K562 (cell line): ENCODE measurements at regions of chr17 and their contacts with region 1.

Region 1: DNA sequence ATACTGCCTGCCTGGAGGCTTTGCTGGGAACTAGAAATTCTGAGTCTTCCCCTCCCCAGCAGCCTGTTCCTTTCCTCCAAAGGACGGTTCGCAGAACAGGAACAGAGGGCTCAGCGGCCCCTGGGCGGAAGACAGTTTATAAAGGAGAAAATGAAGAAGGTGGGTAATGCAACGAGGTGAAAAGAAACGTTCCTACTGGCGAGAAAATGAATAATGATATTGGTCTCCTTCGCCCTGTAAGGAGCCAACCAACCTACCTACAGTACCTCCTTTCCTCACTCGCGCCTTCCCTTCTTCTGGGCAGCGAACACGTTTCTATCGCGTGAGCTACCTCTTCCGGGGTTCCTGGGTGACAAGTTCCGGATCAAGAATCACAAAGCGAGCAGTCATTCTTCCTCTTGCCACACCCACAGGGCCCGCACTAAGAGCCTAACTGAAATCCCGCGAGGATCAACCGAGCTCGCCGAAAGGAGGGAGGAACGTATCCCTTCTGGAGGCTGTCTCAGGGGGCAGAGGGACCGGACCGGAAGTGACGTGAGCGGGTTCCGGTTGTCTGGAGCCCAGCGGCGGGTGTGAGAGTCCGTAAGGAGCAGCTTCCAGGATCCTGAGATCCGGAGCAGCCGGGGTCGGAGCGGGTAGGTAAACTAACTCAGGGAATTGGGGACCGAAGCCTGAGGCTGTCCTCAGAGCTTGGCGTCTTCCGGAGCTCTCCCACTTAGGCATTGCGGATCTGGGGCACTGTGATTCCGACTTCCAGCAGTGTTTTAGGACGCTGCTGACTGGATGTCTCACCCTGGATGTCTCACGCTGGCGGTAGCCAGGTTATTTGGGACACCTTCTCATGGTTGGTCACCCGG is at the starts of genes PTRH2 and VMP1:
- DNase-seq: peak; percentile 94 to 99 (median 96)
- ATAC-seq: peak; percentile 93
- H3K4me3 ChIP-seq: peak within 1 kb of the TSS; percentile 92
- H3K27ac ChIP-seq: peak within 1 kb of the TSS; percentile 99
- H3K4me1 ChIP-seq: peaks cover 13 to 16% of the 10 kb centered on the region in 2 experiments; a peak in 3 of 5 replicates
- H3K27me3 ChIP-seq: no peaks in the 10 kb centered on the region
- CTCF ChIP-seq: 0 out of 6 replicates have a peak, but pooled peaks of 1 of the 3 experiments have one; percentile 9
- EP300 ChIP-seq: no peak; the same call in none of the 2 replicates
- POLR2A ChIP-seq: peak; percentile 99
- RAD21 ChIP-seq: no peak
- polyA plus RNA-seq, gene PTRH2: 195 to 210 TPM
- polyA plus RNA-seq, gene VMP1: 245 to 272 TPM

Region 2: GRCh38 chr17:59725691-59726090 is 18.3 kb after region 1 on chr17:
- CTCF ChIA-PET with region 1: no interaction called
- POLR2A ChIA-PET with region 1: interaction called, 10 read pairs
- in situ Hi-C with region 1: no loop called
- intact Hi-C with region 1: no loop called
- DNase-seq: no peak
- ATAC-seq: no peak
- H3K4me3 ChIP-seq: no peak overlapping the region
- H3K27ac ChIP-seq: no peak overlapping the region
- H3K4me1 ChIP-seq: peaks cover 8 to 13% of the 10 kb centered on the region in 2 experiments; a peak in 3 of 5 replicates
- H3K27me3 ChIP-seq: no peaks in the 10 kb centered on the region
- CTCF ChIP-seq: no peak
- EP300 ChIP-seq: no peak
- POLR2A ChIP-seq: no peak
- RAD21 ChIP-seq: no peak